ENCODE measurements at regions of chr12 and their contacts with region 1.

Region 1: GRCh38 chr12:575948-576612 is 87.2 kb downstream of the NINJ2 start:
- DNase-seq: peak; percentile 42 to 74
- ATAC-seq: peak; percentile 46 to 49
- H3K4me3 ChIP-seq: peak overlapping the region in 3 of 4 donors; percentile 11 to 29 (median 14)
- H3K27ac ChIP-seq: peak overlapping the region; percentile 50 to 73 (median 67)
- H3K4me1 ChIP-seq: peaks cover 42 to 45% of the 10 kb centered on the region in 2 donors
- H3K27me3 ChIP-seq: no peaks in the 10 kb centered on the region
- CTCF ChIP-seq: peak; percentile 99
- POLR2A ChIP-seq: peak in 1 of 2 donors; percentile 10

Region 2: GRCh38 chr12:176321-177181 is 399.5 kb before region 1 on chr12:
- in situ Hi-C with region 1: no loop called
- intact Hi-C with region 1: no loop called
- DNase-seq: no peak
- ATAC-seq: peak; percentile 46 to 50
- H3K4me3 ChIP-seq: no peak overlapping the region
- H3K27ac ChIP-seq: peak overlapping the region; percentile 54 to 71 (median 58)
- H3K4me1 ChIP-seq: peaks cover 34 to 49% of the 10 kb centered on the region in 2 donors
- H3K27me3 ChIP-seq: no peaks in the 10 kb centered on the region
- CTCF ChIP-seq: no peak
- POLR2A ChIP-seq: no peak

Region 3: GRCh38 chr12:238736-239398 is 337.2 kb before region 1 on chr12:
- in situ Hi-C with region 1: no loop called
- intact Hi-C with region 1: no loop called
- DNase-seq: no peak
- ATAC-seq: no peak
- H3K4me3 ChIP-seq: no peak overlapping the region
- H3K27ac ChIP-seq: no peak overlapping the region
- H3K4me1 ChIP-seq: peaks cover under 1 to 2% of the 10 kb centered on the region in 2 donors
- H3K27me3 ChIP-seq: no peaks in the 10 kb centered on the region
- CTCF ChIP-seq: no peak
- POLR2A ChIP-seq: no peak

Region 4: DNA sequence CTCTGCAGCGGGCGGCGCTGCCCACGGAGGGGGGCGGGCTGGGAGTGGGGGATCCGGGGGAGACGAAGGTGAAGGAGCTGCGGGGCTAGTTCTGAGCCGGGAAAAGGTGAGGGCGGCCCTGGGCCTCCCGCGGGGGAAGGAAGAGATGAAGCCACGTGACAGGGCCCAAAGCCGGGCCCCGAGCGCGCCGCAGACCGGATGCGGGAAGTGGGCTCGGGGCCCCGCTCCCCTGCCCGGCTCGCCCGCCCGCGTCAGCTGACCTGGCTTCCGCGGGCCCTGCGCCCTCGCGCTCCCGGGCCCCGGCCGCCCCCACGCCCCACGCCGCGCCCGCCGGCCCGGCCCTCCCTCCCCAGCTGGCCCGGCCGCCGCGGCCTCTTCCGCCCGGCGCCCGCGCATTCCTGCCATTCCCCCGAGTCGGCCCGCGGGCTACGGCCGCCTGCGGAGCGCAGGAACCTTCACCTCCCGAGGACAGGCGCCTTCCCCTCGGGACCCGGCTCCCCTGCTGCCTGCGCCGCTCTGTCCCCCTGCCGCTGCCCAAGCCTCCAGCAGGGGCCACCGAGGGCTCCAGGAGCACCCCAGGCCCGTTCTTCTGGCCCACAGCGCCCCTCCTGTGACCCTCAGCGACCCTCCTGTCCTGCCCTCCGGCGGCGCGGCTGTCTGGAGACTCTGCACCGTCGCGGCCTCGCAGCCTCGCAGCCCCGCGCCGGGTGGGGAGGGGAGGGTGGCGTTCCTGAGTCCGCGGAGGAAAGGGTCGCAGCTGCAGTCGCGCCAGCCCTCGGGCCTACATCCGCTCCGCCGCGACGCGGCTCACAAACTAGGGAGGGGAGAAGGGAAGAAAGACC is 66.8 kb after region 1 on chr12:
- in situ Hi-C with region 1: loop called in 3 of 4 experiments (anchors 5 to 10 kb)
- intact Hi-C with region 1: no loop called
- DNase-seq: peak; percentile 61 to 78
- ATAC-seq: peak; percentile 9 to 37
- H3K4me3 ChIP-seq: peak overlapping the region; percentile 72 to 81 (median 78)
- H3K27ac ChIP-seq: peak overlapping the region; percentile 91 to 99 (median 96)
- H3K4me1 ChIP-seq: peaks cover 57 to 84% of the 10 kb centered on the region in 2 donors
- H3K27me3 ChIP-seq: no peaks in the 10 kb centered on the region
- CTCF ChIP-seq: peak; percentile 13 to 61 (median 54)
- POLR2A ChIP-seq: peak; percentile 51 to 54

Region 5: GRCh38 chr12:650983-651382 is 74.9 kb after region 1 on chr12:
- in situ Hi-C with region 1: loop called (anchors 5 to 10 kb)
- intact Hi-C with region 1: loop called (anchors 2 kb)
- DNase-seq: peak in 1 of 2 donors; percentile 44
- ATAC-seq: peak; percentile 37 to 69
- H3K4me3 ChIP-seq: no peak overlapping the region
- H3K27ac ChIP-seq: peak overlapping the region; percentile 68 to 77 (median 69)
- H3K4me1 ChIP-seq: peaks cover 31 to 34% of the 10 kb centered on the region in 2 donors
- H3K27me3 ChIP-seq: no peaks in the 10 kb centered on the region
- CTCF ChIP-seq: peak in 2 of 5 experiments; percentile 13 to 24
- POLR2A ChIP-seq: no peak

Region 6: DNA sequence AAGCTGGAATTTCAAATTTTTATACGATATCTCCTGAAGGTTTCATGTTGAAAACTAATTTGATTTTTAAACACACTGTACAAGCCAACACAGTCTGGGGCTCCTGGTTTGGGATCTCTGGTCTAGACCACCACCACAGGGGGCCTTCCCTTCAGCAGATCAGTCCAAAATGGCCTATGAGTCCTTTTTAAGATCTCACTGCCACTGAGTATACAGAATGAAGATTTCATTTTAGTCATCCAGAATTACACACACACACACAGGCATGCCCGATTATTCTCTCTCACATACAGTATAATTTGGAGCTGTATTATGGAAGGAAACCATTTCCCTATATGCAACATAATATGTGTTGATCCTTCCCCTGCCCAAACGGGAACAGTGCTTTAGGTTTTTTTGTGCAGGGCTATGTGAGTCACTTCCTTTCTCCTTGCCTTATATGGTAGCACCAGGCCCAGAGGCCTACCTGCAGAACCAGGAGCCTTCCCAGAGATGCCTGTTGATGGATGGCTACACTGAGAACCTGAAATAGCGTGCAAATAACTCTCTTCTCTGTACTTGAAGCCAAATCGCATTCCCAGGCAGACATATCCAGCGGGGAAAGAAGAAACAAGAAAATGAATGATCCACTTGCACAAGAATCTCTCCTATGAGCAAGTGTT is 148.2 kb after region 1 on chr12:
- in situ Hi-C with region 1: loop called in 1 of 4 experiments (anchors 25 kb)
- intact Hi-C with region 1: no loop called
- DNase-seq: no peak
- ATAC-seq: peak in 1 of 2 donors; percentile 13
- H3K4me3 ChIP-seq: no peak overlapping the region
- H3K27ac ChIP-seq: peak overlapping the region in 3 of 4 donors; percentile 7 to 45 (median 23)
- H3K4me1 ChIP-seq: peaks cover 6 to 17% of the 10 kb centered on the region in 2 donors
- H3K27me3 ChIP-seq: no peaks in the 10 kb centered on the region
- CTCF ChIP-seq: no peak
- POLR2A ChIP-seq: no peak

Region 7: GRCh38 chr12:810671-811415 is 234.8 kb after region 1 on chr12:
- in situ Hi-C with region 1: loop called in 3 of 4 experiments (anchors 5 to 10 kb)
- intact Hi-C with region 1: no loop called
- DNase-seq: no peak
- ATAC-seq: no peak
- H3K4me3 ChIP-seq: no peak overlapping the region
- H3K27ac ChIP-seq: peak overlapping the region in 3 of 4 donors; percentile 31 to 81 (median 44)
- H3K4me1 ChIP-seq: peaks cover 46 to 54% of the 10 kb centered on the region in 2 donors
- H3K27me3 ChIP-seq: no peaks in the 10 kb centered on the region
- CTCF ChIP-seq: no peak
- POLR2A ChIP-seq: no peak

Measured in gastrocnemius medialis (tissue), 4 donors.